ENCODE measurements at regions of chr1 and their contacts with region 1.

Region 1: DNA sequence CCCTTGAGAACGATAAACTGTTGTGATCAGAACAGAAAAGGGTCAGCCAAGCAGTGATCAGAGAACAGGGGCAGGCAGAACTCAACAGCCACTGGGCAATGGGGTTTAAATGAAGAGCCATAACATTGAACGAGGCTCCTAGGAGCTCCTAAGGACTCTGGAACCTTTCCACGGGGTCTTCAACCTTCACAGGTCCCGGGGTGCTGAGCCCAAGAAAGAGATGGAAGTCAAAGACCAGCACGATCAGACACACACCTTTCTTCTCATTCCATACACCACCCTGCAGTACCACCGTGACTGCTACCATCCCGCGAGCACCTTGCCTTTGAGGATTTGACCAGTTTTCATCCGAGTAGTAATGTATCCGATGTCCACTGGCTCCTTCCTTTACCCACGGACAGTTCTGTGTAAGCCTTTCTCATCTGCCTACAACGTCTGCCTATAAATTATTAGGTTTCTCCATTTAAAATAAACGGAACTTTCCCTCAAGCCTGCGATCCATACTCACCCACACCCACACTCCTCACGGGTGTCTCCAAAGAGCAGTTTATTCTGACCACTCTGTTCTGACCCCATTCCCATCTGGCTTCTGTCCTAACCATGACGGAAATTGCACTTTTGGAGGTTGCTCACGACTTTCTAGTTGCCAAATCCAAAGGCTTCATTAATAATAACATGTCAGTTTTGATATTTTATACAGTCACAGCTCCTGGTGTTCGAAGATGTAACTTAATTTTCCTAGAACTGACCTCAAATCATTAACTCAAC is 16.8 kb upstream of the HHAT start:
- DNase-seq: no peak

Region 2: GRCh38 chr1:210001751-210002150 is 310.2 kb before region 1 on chr1:
- intact Hi-C with region 1: no loop called
- DNase-seq: no peak

Region 3: GRCh38 chr1:210143465-210144062 is 168.3 kb before region 1 on chr1:
- intact Hi-C with region 1: loop called (anchors 5 kb)
- DNase-seq: peak; percentile 91